Right cardiac atrium (tissue), 5 donors: ENCODE measurements at regions of chr9 and their contacts with region 1.

Region 1: DNA sequence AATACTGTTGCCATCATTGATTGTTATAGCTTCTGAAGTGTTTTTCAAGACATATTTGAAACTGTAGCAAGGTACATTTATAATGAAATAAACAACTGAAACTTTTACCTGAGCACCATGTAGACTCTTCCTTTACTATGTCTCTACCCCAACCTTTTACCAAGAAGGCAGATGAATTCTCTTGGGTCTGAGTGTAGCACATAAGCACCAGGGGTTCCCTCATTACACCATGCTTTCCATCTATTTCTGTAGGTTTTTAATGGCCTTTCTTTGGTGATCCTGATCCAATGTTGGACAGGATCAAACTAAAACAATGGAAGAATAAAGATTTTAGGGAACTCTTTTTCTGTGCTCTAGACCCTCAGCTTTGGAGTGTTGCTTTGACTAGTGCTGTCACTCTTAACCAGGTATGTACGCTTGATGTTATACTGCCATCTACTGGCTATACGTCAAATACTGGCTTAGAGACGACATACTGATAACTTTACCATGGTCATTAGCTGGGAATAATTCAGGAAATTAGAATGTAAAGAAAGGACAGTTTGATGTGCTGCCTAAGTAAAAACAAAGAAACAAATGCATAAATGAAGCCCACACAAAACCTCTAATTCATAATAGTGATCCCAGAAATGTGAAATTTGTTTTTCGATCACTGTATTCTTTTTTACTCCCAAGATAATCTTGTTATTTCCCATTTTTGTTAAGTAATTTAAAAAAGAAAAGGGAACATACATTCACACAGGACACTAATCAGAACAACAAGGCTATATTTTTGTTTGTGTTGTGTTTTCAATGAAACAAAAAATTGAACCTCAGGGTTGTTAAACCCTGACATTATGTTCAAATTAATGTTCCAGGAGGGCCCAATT is 30.7 kb downstream of the IFNW1 start:
- DNase-seq: no peak
- ATAC-seq: peak; percentile 84 to 86
- H3K4me3 ChIP-seq: no peak overlapping the region
- H3K27ac ChIP-seq: no peak overlapping the region
- H3K4me1 ChIP-seq: no peaks in the 10 kb centered on the region
- H3K27me3 ChIP-seq: no peaks in the 10 kb centered on the region

Region 2: GRCh38 chr9:19925817-19926503 is 1185.0 kb before region 1 on chr9:
- intact Hi-C with region 1: loop called in 3 of 4 experiments (anchors 10 kb)
- DNase-seq: peak; percentile 37 to 75 (median 70)
- ATAC-seq: peak; percentile 94 to 95
- H3K4me3 ChIP-seq: peak overlapping the region; percentile 50
- H3K27ac ChIP-seq: no peak overlapping the region
- H3K4me1 ChIP-seq: no peaks in the 10 kb centered on the region
- H3K27me3 ChIP-seq: no peaks in the 10 kb centered on the region

Region 3: GRCh38 chr9:20356403-20357035 is 754.4 kb before region 1 on chr9:
- intact Hi-C with region 1: loop called in 2 of 4 experiments (anchors 10 kb)
- DNase-seq: peak; percentile 56 to 71 (median 67)
- ATAC-seq: peak; percentile 91 to 94
- H3K4me3 ChIP-seq: peak overlapping the region; percentile 40
- H3K27ac ChIP-seq: peak overlapping the region; percentile 1
- H3K4me1 ChIP-seq: no peaks in the 10 kb centered on the region
- H3K27me3 ChIP-seq: no peaks in the 10 kb centered on the region

Region 4: DNA sequence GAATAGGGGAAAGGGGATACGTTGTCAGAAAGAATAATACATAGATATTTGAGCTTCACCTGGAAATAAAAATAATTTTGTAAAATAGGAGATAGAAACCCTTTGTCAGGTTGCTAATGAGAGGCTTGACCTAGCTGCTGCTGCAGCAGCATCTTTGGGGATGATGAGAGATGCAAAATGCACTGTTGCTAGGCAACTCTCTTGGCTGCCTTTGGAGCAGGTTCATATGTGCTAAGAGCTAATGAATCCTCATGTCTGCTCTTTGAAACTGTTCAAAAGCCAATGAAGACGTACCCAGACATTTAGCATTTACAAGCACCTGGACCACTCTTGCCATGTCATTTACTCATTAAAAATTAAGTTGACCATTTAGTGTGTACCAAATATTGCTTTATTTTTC is 305.2 kb before region 1 on chr9:
- intact Hi-C with region 1: no loop called
- DNase-seq: no peak
- ATAC-seq: no peak
- H3K4me3 ChIP-seq: no peak overlapping the region
- H3K27ac ChIP-seq: no peak overlapping the region
- H3K4me1 ChIP-seq: no peaks in the 10 kb centered on the region
- H3K27me3 ChIP-seq: no peaks in the 10 kb centered on the region

Region 5: GRCh38 chr9:20884985-20885593 is 225.9 kb before region 1 on chr9:
- intact Hi-C with region 1: loop called in 2 of 4 experiments (anchors 10 kb)
- DNase-seq: peak; percentile 51 to 76 (median 58)
- ATAC-seq: no peak
- H3K4me3 ChIP-seq: no peak overlapping the region
- H3K27ac ChIP-seq: no peak overlapping the region
- H3K4me1 ChIP-seq: no peaks in the 10 kb centered on the region
- H3K27me3 ChIP-seq: no peaks in the 10 kb centered on the region

Region 6: GRCh38 chr9:20941174-20941690 is 169.7 kb before region 1 on chr9:
- intact Hi-C with region 1: loop called in 1 of 4 experiments (anchors 10 kb)
- DNase-seq: peak; percentile 23 to 64 (median 35)
- ATAC-seq: peak; percentile 86 to 88
- H3K4me3 ChIP-seq: no peak overlapping the region
- H3K27ac ChIP-seq: no peak overlapping the region
- H3K4me1 ChIP-seq: no peaks in the 10 kb centered on the region
- H3K27me3 ChIP-seq: no peaks in the 10 kb centered on the region

Region 7: GRCh38 chr9:21031091-21031807 is 79.7 kb before region 1 on chr9 and contains the start of gene HACD4:
- intact Hi-C with region 1: loop called in 1 of 4 experiments (anchors 10 kb)
- DNase-seq: peak; percentile 48 to 85 (median 84)
- ATAC-seq: peak; percentile 95
- H3K4me3 ChIP-seq: peak within 1 kb of the TSS; percentile 58
- H3K27ac ChIP-seq: no peak within 1 kb of the TSS
- H3K4me1 ChIP-seq: no peaks in the 10 kb centered on the region
- H3K27me3 ChIP-seq: no peaks in the 10 kb centered on the region
- total RNA-seq, gene HACD4: 0.97 to 1.7 (median 1.1) TPM